ENCODE measurements at regions of chr15 and their contacts with region 1.

Region 1: DNA sequence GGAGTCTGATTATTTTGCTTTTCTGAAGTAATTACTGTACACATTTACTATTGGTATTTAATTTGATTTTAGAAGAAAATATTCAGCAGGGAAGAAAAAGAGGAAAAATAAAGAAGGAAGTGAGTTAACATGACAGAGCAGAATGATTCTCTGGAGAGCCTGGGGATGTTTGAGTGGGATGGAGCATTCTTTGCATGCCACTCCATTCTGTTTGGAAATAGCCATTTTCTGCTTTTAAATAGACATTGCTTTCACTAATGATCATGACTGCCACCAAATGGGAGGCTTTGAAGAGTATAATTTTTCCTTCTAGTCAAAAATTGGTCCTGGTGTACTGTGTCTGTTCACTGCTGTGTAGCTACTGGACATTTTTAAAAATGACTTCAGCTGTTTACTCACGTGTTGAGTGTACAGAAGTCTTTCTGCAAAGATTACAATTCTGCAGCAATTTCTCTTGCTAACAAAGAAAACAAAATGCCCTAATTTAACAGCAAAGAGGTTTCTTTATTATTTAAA is 196.1 kb downstream of the RYR3 start:
- DNase-seq: no peak
- ATAC-seq: no peak
- H3K4me3 ChIP-seq: no peak overlapping the region
- H3K27ac ChIP-seq: no peak overlapping the region
- H3K4me1 ChIP-seq: no peaks in the 10 kb centered on the region
- H3K27me3 ChIP-seq: no peaks in the 10 kb centered on the region
- CTCF ChIP-seq: no peak

Region 2: DNA sequence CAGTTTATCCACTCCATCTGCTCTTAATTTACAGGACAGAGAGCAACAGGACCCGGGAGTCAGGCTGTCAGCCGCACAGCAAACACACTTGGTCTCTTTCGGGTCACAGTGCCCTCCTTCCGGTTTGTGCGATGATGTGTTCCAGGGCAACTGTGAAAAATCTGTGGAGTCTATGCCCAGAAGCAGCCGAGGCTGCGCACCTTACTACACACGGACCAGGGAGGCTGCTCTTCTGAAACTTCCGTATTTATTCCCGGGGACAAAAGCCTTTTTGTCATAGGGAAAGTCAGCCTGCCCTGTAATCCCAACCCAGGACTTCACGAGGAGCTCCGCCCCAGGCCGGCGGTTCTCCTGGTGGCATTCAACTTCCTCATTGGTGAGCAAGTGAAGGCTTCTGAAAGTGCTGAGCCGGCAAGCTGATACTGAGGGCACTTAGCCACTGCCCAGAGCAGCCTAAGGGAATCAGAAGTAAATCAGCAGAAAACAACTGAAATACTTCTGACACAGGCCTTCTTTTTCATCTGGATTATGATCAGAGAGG is 438.8 kb before region 1 on chr15:
- intact Hi-C with region 1: no loop called
- DNase-seq: peak; percentile 34 to 46
- ATAC-seq: peak in 7 of 8 donors; percentile 47 to 88 (median 77)
- H3K4me3 ChIP-seq: peak overlapping the region in 4 of 10 donors; percentile 15 to 34 (median 24)
- H3K27ac ChIP-seq: peak overlapping the region in 1 of 10 donors; percentile 76
- H3K4me1 ChIP-seq: peaks cover 0 to 24% (median 3%) of the 10 kb centered on the region in 9 donors
- H3K27me3 ChIP-seq: peaks cover 0 to 4% (median 0%) of the 10 kb centered on the region in 7 donors
- CTCF ChIP-seq: no peak

Region 3: DNA sequence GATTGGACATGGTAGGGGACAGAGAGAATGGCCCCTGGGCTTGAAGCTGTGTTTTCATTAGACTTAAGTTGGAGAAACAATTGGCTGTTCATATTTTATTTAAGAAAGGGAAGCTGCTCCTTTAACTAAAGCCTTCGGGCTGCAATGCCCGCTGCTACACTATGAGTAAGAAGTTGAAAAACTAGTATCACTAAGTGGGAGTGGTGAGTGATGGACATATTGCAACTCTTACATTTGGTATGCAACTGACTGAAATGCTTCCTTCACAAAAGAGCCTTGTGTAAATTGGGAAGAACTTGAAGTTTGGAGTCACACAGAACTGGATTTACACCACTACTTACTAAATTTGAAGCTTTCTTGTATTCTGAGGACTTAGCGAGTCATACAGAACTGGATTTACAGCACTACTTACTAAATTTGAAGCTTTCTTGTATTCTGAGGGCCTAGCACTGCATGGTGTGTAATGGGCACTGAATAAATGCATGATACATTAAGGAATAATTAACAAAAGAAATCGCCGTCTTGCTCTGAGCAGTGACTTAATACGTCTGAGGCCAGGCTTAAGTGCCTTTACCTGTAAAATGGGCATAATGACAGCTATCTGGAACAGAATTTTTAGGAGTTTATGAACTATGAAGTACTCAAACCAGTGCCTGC is 46.6 kb before region 1 on chr15:
- intact Hi-C with region 1: loop called in 1 of 10 experiments (anchors 1 kb)
- DNase-seq: no peak
- ATAC-seq: no peak
- H3K4me3 ChIP-seq: no peak overlapping the region
- H3K27ac ChIP-seq: no peak overlapping the region
- H3K4me1 ChIP-seq: no peaks in the 10 kb centered on the region
- H3K27me3 ChIP-seq: no peaks in the 10 kb centered on the region
- CTCF ChIP-seq: no peak

Region 4: GRCh38 chr15:33559207-33559890 is 52.5 kb after region 1 on chr15:
- intact Hi-C with region 1: no loop called
- DNase-seq: no peak
- ATAC-seq: no peak
- H3K4me3 ChIP-seq: no peak overlapping the region
- H3K27ac ChIP-seq: no peak overlapping the region
- H3K4me1 ChIP-seq: no peaks in the 10 kb centered on the region
- H3K27me3 ChIP-seq: peaks cover 0 to 4% (median 0%) of the 10 kb centered on the region in 7 donors
- CTCF ChIP-seq: no peak

Region 5: DNA sequence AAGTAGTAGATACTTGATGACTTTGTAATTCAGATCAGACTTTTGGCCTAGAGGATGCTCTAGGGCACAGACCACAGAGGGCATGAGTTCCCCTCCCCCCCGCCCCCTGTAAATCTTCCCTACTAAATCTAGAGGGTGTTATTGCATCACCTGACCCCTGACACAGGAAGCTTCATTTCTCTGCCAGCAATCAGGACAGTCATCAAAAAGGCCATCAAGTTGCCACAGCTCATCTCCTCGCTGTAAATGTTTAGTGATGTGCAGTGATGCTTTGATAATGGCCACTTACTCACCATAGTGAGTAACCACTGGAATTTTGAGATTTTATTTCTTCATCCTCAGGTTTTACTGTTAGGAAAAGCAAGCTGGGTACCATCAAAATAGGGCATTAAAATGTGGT is 172.2 kb after region 1 on chr15:
- intact Hi-C with region 1: no loop called
- DNase-seq: no peak
- ATAC-seq: no peak
- H3K4me3 ChIP-seq: no peak overlapping the region
- H3K27ac ChIP-seq: no peak overlapping the region
- H3K4me1 ChIP-seq: no peaks in the 10 kb centered on the region
- H3K27me3 ChIP-seq: peaks cover 0 to 47% (median 9%) of the 10 kb centered on the region in 7 donors
- CTCF ChIP-seq: no peak